Activated CD4-positive, alpha-beta memory T cell treated with anti-CD3 and anti-CD28 coated beads for 36 hours (primary cell): ENCODE measurements at regions of chr5 and their contacts with region 1.

Region 1: DNA sequence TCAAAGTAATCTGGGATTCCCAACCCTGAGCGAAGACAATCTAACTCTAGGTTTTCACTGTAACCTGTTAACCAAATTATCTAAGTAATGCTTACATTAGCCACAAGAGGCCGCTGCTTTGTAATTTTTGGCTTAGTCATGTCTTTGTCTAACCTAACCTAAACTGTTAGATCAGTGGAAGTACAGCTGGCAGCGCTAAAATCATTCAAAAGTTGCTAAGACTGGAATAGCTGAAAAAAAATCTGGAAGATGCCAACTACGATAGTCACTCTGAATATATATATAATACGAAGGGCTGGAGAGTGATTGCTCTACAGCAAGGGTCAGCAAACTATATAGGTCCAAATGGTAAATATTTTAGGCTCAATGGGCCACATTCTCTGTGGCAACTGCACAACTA is 60.2 kb downstream of the FBXO38 start:
- DNase-seq: peak; percentile 27
- H3K4me3 Mint-ChIP-seq: no peak overlapping the region
- H3K27ac Mint-ChIP-seq: no peak overlapping the region
- H3K4me1 Mint-ChIP-seq: no peaks in the 10 kb centered on the region
- H3K27me3 Mint-ChIP-seq: no peaks in the 10 kb centered on the region

Region 2: DNA sequence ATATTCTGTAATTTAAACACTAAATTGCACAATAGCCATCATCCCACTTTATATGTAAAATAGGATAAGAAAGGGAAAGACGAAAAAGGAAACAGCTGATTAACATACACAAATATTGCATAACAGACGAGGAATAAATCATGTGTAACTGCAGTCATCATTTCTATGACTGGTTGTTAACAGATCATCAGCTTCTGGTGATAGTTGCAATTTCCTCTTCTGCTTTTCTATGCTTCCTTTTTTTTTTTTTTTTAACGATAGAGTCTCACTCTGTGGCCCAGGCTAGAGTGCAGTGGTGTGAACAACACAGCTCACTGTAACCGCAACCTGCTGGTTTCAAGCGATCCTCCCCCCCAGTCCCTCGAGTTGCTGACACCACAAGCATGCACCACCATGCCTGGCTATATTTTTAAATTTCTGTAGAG is 639.0 kb before region 1 on chr5:
- CTCF ChIA-PET with region 1: no interaction called
- POLR2A ChIA-PET with region 1: no interaction called
- intact Hi-C with region 1: no loop called
- DNase-seq: no peak
- H3K4me3 Mint-ChIP-seq: no peak overlapping the region
- H3K27ac Mint-ChIP-seq: no peak overlapping the region
- H3K4me1 Mint-ChIP-seq: no peaks in the 10 kb centered on the region
- H3K27me3 Mint-ChIP-seq: peaks cover 3% of the 10 kb centered on the region

Region 3: GRCh38 chr5:147949711-147950573 is 494.1 kb before region 1 on chr5:
- CTCF ChIA-PET with region 1: no interaction called
- POLR2A ChIA-PET with region 1: no interaction called
- intact Hi-C with region 1: loop called (anchors 5 kb)
- DNase-seq: no peak
- H3K4me3 Mint-ChIP-seq: no peak overlapping the region
- H3K27ac Mint-ChIP-seq: no peak overlapping the region
- H3K4me1 Mint-ChIP-seq: no peaks in the 10 kb centered on the region
- H3K27me3 Mint-ChIP-seq: peaks cover 2% of the 10 kb centered on the region

Region 4: DNA sequence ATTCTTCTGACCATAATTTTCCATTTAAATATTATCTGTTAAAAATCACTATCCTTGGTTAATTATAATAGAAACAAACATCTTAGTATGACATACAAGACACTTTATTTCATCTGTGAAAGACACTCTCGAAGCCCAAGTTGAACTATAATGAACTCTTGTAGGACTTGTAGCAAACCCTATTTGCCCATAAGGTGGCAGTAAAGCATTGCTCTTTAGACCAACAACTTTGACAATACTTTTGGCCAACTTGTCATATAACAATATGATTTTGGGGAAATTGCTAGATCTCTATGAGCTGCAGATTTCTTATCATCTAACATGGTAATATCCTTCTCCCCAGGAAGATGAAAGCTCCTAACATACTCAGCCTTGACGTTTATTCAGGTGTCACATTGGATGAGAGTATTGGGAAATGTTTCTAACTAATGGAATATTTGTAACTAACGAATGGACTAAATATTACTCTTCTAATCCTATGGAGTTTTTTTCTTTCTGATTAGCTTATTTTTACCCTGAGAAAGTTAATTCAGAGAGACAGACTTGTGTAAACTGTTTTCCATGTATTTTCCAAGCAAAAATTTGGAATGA is 264.7 kb before region 1 on chr5:
- CTCF ChIA-PET with region 1: interaction called, 10 read pairs
- POLR2A ChIA-PET with region 1: no interaction called
- intact Hi-C with region 1: loop called (anchors 1 kb)
- DNase-seq: no peak
- H3K4me3 Mint-ChIP-seq: no peak overlapping the region
- H3K27ac Mint-ChIP-seq: no peak overlapping the region
- H3K4me1 Mint-ChIP-seq: no peaks in the 10 kb centered on the region
- H3K27me3 Mint-ChIP-seq: peaks cover 7% of the 10 kb centered on the region

Region 5: GRCh38 chr5:148290271-148291195 is 153.5 kb before region 1 on chr5:
- CTCF ChIA-PET with region 1: no interaction called
- POLR2A ChIA-PET with region 1: no interaction called
- intact Hi-C with region 1: loop called (anchors 10 kb)
- DNase-seq: no peak
- H3K4me3 Mint-ChIP-seq: no peak overlapping the region
- H3K27ac Mint-ChIP-seq: no peak overlapping the region
- H3K4me1 Mint-ChIP-seq: no peaks in the 10 kb centered on the region
- H3K27me3 Mint-ChIP-seq: peaks cover 3% of the 10 kb centered on the region

Region 6: GRCh38 chr5:148482691-148483462 is 38.9 kb after region 1 on chr5:
- CTCF ChIA-PET with region 1: interaction called, 25 read pairs
- POLR2A ChIA-PET with region 1: no interaction called
- intact Hi-C with region 1: loop called (anchors 2 kb)
- DNase-seq: peak; percentile 74
- H3K4me3 Mint-ChIP-seq: no peak overlapping the region
- H3K27ac Mint-ChIP-seq: no peak overlapping the region
- H3K4me1 Mint-ChIP-seq: peaks cover 3% of the 10 kb centered on the region
- H3K27me3 Mint-ChIP-seq: peaks cover 30% of the 10 kb centered on the region